Dendritic cell treated with granulocyte-macrophage colony-stimulating factor and Interleukin-4, amounts not matched to agents 40 ng/mL and 50 ng/mL, for 4 days (primary cell): ENCODE measurements at regions of chrX and their contacts with region 1.

Region 1: GRCh38 chrX:120790118-120790517 is 85.5 kb downstream of the CT47B1 start:
- H3K4me3 Mint-ChIP-seq: no peak overlapping the region
- H3K27ac Mint-ChIP-seq: no peak overlapping the region
- H3K4me1 Mint-ChIP-seq: peaks cover 20% of the 10 kb centered on the region
- H3K27me3 Mint-ChIP-seq: no peaks in the 10 kb centered on the region

Region 2: DNA sequence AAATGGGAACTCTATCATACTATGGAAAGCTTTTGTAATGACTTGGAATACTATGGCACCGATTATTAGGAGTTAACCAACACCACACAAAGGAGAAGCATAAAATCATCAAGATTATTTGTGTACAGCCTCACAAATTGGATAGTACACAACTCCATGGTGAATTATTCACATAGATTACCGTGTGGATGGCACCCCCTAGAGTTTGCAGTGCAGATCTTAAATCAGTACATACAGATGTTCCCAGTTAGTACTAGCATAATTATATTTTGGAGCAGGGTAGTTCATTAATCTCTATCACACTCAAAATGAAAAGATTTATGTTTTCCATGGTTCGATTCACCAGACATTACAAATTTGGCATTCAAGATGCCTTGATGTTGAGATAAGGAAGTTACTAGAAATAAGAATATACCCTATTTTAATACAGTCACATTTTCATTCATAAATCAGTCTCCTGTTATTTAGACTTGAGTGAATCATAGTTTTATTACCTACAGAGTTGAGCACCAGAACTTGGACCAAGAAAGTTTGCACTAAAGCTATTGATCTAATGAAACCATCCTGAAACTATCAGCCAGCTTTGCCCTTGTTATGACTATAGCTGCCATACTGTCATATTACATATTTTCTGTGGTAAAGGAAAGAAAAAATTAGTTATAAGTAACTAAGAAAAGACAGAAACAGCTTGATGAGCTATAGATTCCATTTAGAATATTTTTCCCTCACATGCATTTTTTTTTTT is 789.1 kb after region 1 on chrX:
- intact Hi-C with region 1: loop called (anchors 5 kb)
- H3K4me3 Mint-ChIP-seq: no peak overlapping the region
- H3K27ac Mint-ChIP-seq: no peak overlapping the region
- H3K4me1 Mint-ChIP-seq: no peaks in the 10 kb centered on the region
- H3K27me3 Mint-ChIP-seq: no peaks in the 10 kb centered on the region